Activated T-helper 2 cell treated with anti-CD3 and anti-CD28 coated beads, Interferon-gamma antibody, Interleukin-2, Interleukin-4, amounts not matched to agents 10 μg/mL and 5 μg/mL and 100 μg/mL, durations not matched to agents 14 hours and 24 hours and 36 hours (primary cell): ENCODE measurements at regions of chr1 and their contacts with region 1.

Region 1: DNA sequence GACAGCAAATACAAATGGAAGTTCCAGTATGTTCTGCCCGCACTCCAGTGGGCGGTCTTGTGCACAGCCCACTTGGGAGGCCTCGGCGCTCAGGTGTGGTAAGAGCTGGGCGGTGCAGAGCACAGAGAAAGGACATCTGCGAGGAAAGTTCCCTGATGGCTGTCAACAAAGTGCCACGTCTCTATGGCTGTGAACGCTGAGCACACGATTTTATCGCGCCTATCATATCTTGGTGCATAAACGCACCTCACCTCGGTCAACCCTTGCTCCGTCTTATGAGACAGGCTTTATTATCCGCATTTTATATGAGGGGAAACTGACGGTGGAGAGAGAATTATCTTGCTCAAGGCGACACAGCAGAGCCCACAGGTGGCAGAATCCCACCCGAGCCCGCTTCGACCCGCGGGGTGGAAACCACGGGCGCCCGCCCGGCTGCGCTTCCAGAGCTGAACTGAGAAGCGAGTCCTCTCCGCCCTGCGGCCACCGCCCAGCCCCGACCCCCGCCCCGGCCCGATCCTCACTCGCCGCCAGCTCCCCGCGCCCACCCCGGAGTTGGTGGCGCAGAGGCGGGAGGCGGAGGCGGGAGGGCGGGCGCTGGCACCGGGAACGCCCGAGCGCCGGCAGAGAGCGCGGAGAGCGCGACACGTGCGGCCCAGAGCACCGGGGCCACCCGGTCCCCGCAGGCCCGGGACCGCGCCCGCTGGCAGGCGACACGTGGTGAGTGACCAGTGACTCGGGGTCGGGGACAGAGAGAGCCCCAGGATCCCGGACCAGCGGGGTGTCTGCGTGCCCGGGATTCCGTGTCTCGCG is at the start of gene IL12RB2:
- DNase-seq: peak; percentile 57
- H3K4me3 Mint-ChIP-seq: peak within 1 kb of the TSS; percentile 94
- H3K27ac Mint-ChIP-seq: peak within 1 kb of the TSS; percentile 95
- H3K4me1 Mint-ChIP-seq: peaks cover 69% of the 10 kb centered on the region
- H3K27me3 Mint-ChIP-seq: no peaks in the 10 kb centered on the region
- total RNA-seq, gene IL12RB2: 108 TPM in 2 replicates

Region 2: GRCh38 chr1:67162957-67163356 is 144.5 kb before region 1 on chr1:
- intact Hi-C with region 1: loop called (anchors 2 kb)
- DNase-seq: peak; percentile 40
- H3K4me3 Mint-ChIP-seq: no peak overlapping the region
- H3K27ac Mint-ChIP-seq: peak overlapping the region; percentile 58
- H3K4me1 Mint-ChIP-seq: peaks cover 41% of the 10 kb centered on the region
- H3K27me3 Mint-ChIP-seq: no peaks in the 10 kb centered on the region

Region 3: DNA sequence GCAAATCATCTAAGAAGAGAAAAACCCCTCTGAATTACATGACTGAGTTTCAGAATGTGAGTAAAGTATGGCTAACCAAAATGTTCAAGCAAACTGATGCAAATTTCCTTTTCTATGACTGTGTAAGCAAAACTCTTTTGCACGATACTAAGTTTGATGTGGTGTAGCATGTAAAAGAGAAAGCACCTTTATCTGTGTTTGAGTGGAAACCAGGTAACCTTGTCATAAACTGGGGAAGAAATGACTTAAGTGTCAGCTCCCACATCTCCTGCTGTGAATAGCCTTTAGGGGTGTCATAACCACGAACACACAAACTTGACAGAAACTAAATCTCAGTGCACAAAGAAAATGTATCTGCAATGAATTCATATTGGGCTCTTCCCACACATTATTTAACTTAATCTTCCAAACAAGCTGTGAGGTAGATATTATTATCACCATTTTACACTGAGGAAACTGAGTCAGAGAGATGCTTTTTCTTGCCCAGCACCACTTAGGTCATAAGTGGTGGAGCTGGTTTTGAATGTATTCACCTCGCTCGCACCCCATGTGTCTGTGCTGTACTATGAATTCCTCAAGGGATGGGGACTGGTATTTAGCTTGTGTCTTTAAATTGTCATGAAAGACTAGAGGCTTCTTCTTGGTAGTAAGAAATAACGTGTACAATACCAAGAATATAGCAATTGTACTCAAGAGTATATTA is 32.7 kb before region 1 on chr1:
- intact Hi-C with region 1: loop called (anchors 1 kb)
- DNase-seq: no peak
- H3K4me3 Mint-ChIP-seq: no peak overlapping the region
- H3K27ac Mint-ChIP-seq: peak overlapping the region; percentile 59
- H3K4me1 Mint-ChIP-seq: peaks cover 37% of the 10 kb centered on the region
- H3K27me3 Mint-ChIP-seq: no peaks in the 10 kb centered on the region

Region 4: GRCh38 chr1:67294836-67295617 is 12.4 kb before region 1 on chr1:
- intact Hi-C with region 1: loop called (anchors 1 kb)
- DNase-seq: peak; percentile 34
- H3K4me3 Mint-ChIP-seq: peak overlapping the region; percentile 68
- H3K27ac Mint-ChIP-seq: peak overlapping the region; percentile 92
- H3K4me1 Mint-ChIP-seq: peaks cover 46% of the 10 kb centered on the region
- H3K27me3 Mint-ChIP-seq: no peaks in the 10 kb centered on the region